ENCODE measurements at regions of chr14 and their contacts with region 1.

Region 1: GRCh38 chr14:52131640-52132320 is 62.9 kb upstream of the NID2 start:
- DNase-seq: peak; percentile 95
- H3K4me3 ChIP-seq: no peak overlapping the region
- H3K27ac ChIP-seq: no peak overlapping the region
- H3K4me1 ChIP-seq: no peaks in the 10 kb centered on the region
- H3K27me3 ChIP-seq: no peaks in the 10 kb centered on the region
- CTCF ChIP-seq: peak; percentile 59

Region 2: GRCh38 chr14:51989293-51990234 is 142.2 kb before region 1 on chr14 and contains the start of gene RTRAF:
- intact Hi-C with region 1: loop called (anchors 2 kb)
- DNase-seq: peak; percentile 95
- H3K4me3 ChIP-seq: peak within 1 kb of the TSS; percentile 83
- H3K27ac ChIP-seq: peak within 1 kb of the TSS; percentile 65
- H3K4me1 ChIP-seq: peaks cover 3% of the 10 kb centered on the region
- H3K27me3 ChIP-seq: no peaks in the 10 kb centered on the region
- CTCF ChIP-seq: no peak
- total RNA-seq, gene RTRAF: 157 to 181 TPM

Measured in colonic mucosa (tissue), 4 donors.